Esophagus muscularis mucosa (tissue), 4 donors: ENCODE measurements at regions of chr5 and their contacts with region 1.

Region 1: DNA sequence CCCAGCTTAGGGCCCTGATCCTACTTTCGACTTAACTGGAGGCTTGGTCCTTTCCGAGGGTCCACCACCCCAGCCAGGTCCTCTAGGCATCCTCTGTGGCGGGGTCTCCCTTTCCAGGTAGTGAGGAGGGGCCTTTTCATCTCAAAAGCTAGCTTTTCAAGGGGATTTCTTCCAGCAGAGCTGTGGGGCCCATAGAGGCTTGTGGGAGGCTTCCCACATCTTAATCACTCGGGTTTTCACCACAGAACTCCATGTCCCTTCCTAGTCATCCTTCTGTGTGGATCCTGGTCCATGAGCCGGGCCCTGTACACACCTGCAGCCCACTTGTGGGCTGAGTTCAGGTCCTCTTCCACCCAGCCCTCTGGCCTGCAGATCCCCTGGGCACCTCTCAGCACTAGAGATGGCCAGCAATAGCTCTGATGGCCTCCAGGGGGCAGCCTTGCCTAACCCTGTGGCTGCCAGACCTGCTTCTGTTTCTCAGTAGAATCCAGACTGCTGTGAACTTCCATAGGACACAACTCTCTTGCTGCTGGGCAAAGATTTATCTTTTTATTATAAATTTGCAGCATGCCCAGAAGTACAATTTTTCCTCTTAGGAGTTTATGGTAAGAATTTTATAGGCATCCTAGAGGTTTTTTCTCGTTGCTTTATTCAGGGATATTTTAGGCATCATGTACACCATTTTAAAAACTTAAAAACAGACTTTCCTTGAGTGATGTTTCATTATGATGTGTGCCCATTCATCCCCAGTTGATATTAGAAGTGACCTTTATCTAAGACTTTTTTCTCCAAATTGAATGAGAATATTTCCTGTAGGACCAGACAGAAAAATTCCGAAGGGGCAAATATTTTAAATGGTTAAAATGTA is 208.9 kb downstream of the TRIO start:
- DNase-seq: no peak
- H3K4me3 ChIP-seq: no peak overlapping the region
- H3K27ac ChIP-seq: no peak overlapping the region
- H3K4me1 ChIP-seq: peaks cover 19 to 67% (median 54%) of the 10 kb centered on the region in 4 donors
- H3K27me3 ChIP-seq: no peaks in the 10 kb centered on the region
- CTCF ChIP-seq: peak in 2 of 3 experiments; percentile 85 to 91
- EP300 ChIP-seq: no peak
- POLR2A ChIP-seq: no peak

Region 2: DNA sequence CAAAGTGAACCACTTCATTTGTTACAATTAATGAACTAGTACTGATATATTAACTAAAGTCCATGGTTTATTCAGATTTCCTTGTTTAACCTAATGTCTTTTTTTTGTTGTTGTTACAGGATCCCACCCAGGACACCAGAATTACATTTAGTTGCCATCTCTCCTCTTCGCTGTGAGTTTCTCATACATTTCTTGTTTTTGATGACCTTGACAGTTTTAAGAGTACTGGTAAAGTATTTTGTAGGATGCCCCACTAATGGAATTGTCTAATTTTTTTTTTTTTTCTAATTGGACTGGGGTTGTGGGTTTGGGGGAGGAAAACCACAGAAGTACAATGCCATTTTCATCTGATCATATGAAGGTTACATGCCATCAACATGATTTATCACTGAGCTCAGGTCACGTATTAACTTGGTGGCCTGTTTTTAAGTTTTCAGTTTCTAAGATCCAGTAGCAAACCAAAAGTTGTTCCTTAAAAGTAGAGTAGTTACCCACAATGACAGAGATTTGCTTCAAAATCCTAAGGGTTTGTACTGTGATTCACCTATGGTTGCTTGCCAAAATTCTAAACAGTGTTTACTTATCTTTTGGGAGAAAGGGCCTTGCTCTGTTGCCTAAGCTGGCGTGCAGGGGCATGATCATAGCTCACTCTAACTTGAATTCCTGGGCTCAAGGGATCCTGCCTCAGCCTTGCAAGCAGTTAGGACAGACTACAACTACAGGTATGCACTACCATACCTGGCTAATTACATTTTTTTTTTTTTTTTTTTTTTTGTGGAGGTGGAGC is 307.9 kb after region 1 on chr5:
- intact Hi-C with region 1: loop called (anchors 10 kb)
- DNase-seq: no peak
- H3K4me3 ChIP-seq: no peak overlapping the region
- H3K27ac ChIP-seq: no peak overlapping the region
- H3K4me1 ChIP-seq: peaks cover 10 to 13% (median 11%) of the 10 kb centered on the region in 4 donors
- H3K27me3 ChIP-seq: no peaks in the 10 kb centered on the region
- CTCF ChIP-seq: no peak
- EP300 ChIP-seq: no peak
- POLR2A ChIP-seq: no peak